Caco-2 (cell line): ENCODE measurements at regions of chr5 and their contacts with region 1.

Region 1: DNA sequence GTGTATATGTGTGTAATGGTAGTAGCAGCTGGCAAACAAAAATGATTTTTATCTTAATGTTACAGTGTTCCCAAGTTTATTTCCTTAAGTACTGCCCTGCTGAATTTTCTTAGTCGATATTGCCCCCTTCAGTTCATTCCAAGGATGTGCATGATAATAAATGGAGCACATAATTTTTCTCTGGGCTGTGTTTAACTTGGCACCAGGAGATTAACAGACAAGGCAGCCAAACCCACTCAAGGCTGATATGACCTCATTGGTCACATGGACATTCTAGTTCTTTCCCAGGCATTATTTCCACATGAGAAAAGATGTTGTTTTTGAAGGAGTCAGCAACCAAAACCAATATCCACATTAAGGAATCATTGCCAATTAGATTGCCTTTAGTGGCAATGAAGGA is 61.8 kb downstream of the COX7C start:
- DNase-seq: peak in 1 of 2 experiments; percentile 9
- H3K4me3 ChIP-seq: no peak overlapping the region
- H3K4me3 Mint-ChIP-seq: no peak overlapping the region
- H3K27ac Mint-ChIP-seq: no peak overlapping the region
- H3K4me1 ChIP-seq: no peaks in the 10 kb centered on the region
- H3K4me1 Mint-ChIP-seq: no peaks in the 10 kb centered on the region
- H3K27me3 ChIP-seq: no peaks in the 10 kb centered on the region
- H3K27me3 Mint-ChIP-seq: peaks cover 8% of the 10 kb centered on the region
- CTCF ChIP-seq: peak; percentile 44 to 51

Region 2: DNA sequence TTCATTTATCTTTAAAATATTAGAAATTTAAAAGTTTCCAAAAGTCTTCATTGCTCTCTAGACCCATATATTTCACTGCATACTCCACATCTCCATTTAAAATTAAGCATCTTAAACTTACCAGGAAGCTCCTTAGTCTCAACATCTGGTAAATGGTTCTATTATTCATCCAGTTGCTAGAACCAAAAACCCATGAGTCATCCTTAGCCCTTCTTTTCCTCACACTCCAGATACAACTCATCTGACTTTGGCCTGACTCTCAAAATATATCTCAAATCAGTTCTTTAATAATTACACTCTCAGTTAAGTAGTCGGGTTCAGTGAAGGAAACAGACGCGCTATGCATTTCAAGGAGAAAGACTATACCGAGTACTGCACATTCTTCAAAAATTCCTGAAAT is 172.0 kb before region 1 on chr5:
- CTCF ChIA-PET with region 1: no interaction called
- POLR2A ChIA-PET with region 1: no interaction called
- intact Hi-C with region 1: loop called (anchors 5 kb)
- DNase-seq: no peak
- H3K4me3 ChIP-seq: no peak overlapping the region
- H3K4me3 Mint-ChIP-seq: no peak overlapping the region
- H3K27ac Mint-ChIP-seq: no peak overlapping the region
- H3K4me1 ChIP-seq: no peaks in the 10 kb centered on the region
- H3K4me1 Mint-ChIP-seq: no peaks in the 10 kb centered on the region
- H3K27me3 ChIP-seq: no peaks in the 10 kb centered on the region
- H3K27me3 Mint-ChIP-seq: no peaks in the 10 kb centered on the region
- CTCF ChIP-seq: no peak

Region 3: GRCh38 chr5:86565197-86565789 is 114.2 kb before region 1 on chr5:
- CTCF ChIA-PET with region 1: no interaction called
- POLR2A ChIA-PET with region 1: no interaction called
- intact Hi-C with region 1: loop called (anchors 1 kb)
- DNase-seq: no peak
- H3K4me3 ChIP-seq: no peak overlapping the region
- H3K4me3 Mint-ChIP-seq: no peak overlapping the region
- H3K27ac Mint-ChIP-seq: no peak overlapping the region
- H3K4me1 ChIP-seq: peaks cover 11% of the 10 kb centered on the region
- H3K4me1 Mint-ChIP-seq: no peaks in the 10 kb centered on the region
- H3K27me3 ChIP-seq: no peaks in the 10 kb centered on the region
- H3K27me3 Mint-ChIP-seq: peaks cover 3% of the 10 kb centered on the region
- CTCF ChIP-seq: no peak

Region 4: GRCh38 chr5:86786955-86787354 is 107.4 kb after region 1 on chr5:
- CTCF ChIA-PET with region 1: no interaction called
- POLR2A ChIA-PET with region 1: no interaction called
- intact Hi-C with region 1: no loop called
- DNase-seq: no peak
- H3K4me3 ChIP-seq: no peak overlapping the region
- H3K4me3 Mint-ChIP-seq: no peak overlapping the region
- H3K27ac Mint-ChIP-seq: no peak overlapping the region
- H3K4me1 ChIP-seq: no peaks in the 10 kb centered on the region
- H3K4me1 Mint-ChIP-seq: no peaks in the 10 kb centered on the region
- H3K27me3 ChIP-seq: no peaks in the 10 kb centered on the region
- H3K27me3 Mint-ChIP-seq: peaks cover 7% of the 10 kb centered on the region
- CTCF ChIP-seq: no peak

Region 5: GRCh38 chr5:87169300-87169991 is 489.9 kb after region 1 on chr5:
- CTCF ChIA-PET with region 1: no interaction called
- POLR2A ChIA-PET with region 1: no interaction called
- intact Hi-C with region 1: no loop called
- DNase-seq: no peak
- H3K4me3 ChIP-seq: no peak overlapping the region
- H3K4me3 Mint-ChIP-seq: no peak overlapping the region
- H3K27ac Mint-ChIP-seq: no peak overlapping the region
- H3K4me1 ChIP-seq: no peaks in the 10 kb centered on the region
- H3K4me1 Mint-ChIP-seq: no peaks in the 10 kb centered on the region
- H3K27me3 ChIP-seq: no peaks in the 10 kb centered on the region
- H3K27me3 Mint-ChIP-seq: peaks cover 2% of the 10 kb centered on the region
- CTCF ChIP-seq: no peak